ENCODE measurements at regions of chr2 and their contacts with region 1.

Region 1: GRCh38 chr2:233404222-233404621 is 49.9 kb downstream of the DGKD start:
- DNase-seq: no peak
- ATAC-seq: no peak
- H3K4me3 ChIP-seq: no peak overlapping the region
- H3K27ac ChIP-seq: no peak overlapping the region
- H3K4me1 ChIP-seq: no peaks in the 10 kb centered on the region
- H3K27me3 ChIP-seq: no peaks in the 10 kb centered on the region

Region 2: GRCh38 chr2:233443468-233444183 is 39.4 kb after region 1 on chr2:
- intact Hi-C with region 1: loop called (anchors 1 to 5 kb)
- DNase-seq: peak; percentile 85 to 92
- ATAC-seq: peak; percentile 80
- H3K4me3 ChIP-seq: no peak overlapping the region
- H3K27ac ChIP-seq: no peak overlapping the region
- H3K4me1 ChIP-seq: no peaks in the 10 kb centered on the region
- H3K27me3 ChIP-seq: no peaks in the 10 kb centered on the region

Region 3: DNA sequence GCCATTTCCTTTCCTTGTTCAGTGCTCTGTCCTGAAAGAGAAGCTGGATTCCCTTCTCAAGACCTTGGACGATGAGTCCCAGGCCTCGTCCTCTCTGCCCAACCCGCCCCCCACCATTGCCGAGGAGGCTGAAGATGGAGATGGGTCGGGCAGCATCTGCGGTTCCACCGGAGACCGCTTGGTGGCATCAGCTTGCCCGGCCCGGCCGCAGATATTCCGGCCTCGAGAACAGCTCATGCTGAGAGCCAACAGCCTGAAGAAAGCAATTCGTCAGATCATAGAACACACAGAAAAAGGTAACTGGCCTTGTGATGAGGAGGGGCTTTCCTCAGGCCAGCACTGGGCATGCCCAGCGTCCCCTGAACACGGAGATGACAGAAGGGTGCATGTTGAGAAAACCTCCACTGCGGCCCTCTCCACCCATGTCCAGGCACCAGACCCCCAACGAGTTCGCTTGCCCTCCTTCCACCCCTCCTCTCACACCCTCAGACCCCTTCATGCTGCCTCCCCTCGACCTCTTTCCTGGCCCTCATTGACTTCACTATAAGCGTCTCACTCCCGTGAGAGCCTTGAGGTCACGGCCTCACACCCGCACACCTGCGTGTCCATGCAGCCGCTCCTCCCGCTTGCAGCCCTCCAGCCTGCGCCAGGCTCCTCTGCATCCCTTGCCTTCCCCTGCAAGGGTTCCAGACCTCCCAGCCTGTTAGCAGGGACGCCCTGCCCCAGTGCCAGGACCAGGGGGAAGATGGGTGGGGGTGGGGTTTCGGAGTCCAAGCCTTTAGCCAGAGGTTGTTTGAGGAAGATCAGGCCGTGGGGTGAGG is 45.1 kb after region 1 on chr2:
- intact Hi-C with region 1: loop called in 1 of 2 experiments (anchors 5 kb)
- DNase-seq: peak in 1 of 2 donors; percentile 81
- ATAC-seq: no peak
- H3K4me3 ChIP-seq: no peak overlapping the region
- H3K27ac ChIP-seq: no peak overlapping the region
- H3K4me1 ChIP-seq: no peaks in the 10 kb centered on the region
- H3K27me3 ChIP-seq: no peaks in the 10 kb centered on the region

Measured in aorta (tissue), 5 donors.